Right ventricle myocardium inferior (tissue), 1 donor: ENCODE measurements at regions of chr7 and their contacts with region 1.

Region 1: DNA sequence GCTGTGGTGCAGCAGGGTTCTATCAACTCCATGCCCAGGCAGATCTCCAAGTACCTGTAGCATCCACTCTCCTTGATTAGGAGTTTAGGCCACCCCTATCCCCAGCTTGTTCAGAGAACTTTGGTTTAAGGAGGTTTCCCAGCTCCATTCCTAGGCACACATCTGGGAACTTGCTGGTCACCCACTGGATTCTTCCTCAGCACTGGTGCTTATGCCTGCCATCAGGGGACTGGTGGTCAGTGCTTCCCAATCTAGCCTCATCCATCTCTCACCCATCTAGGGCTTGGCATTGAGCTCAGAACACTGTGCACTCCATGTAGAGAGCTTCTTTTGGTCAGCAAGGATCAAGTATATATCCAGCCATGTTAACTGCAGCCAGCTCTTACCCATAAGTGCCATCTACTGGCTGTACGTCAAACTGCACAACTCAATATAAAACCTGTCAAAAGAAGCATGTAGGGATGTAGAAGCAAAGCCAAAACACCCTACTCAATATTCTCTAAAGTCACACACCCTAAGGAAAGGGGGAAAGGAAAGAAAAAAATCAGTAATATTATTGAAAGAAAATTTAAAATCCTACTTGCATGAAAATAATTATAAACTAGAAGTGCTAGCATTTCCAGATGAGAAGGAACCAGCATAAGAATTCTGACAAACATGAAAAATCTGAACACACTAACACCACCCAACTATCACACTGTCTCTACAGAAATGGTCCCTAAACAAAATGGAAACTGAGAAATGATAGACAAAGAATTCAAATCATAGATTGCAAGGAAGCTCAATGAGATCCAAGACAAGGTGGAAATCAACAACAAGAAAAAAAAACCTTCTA is 531.2 kb upstream of the STEAP1 start:
- DNase-seq: no peak
- ATAC-seq: peak; percentile 54

Region 2: GRCh38 chr7:88789480-88790064 is 833.5 kb before region 1 on chr7:
- intact Hi-C with region 1: loop called (anchors 10 kb)
- DNase-seq: no peak
- ATAC-seq: no peak